ENCODE measurements at regions of chr3 and their contacts with region 1.

Region 1: GRCh38 chr3:196073188-196073838 is 8.6 kb downstream of the TFRC start:
- DNase-seq: peak; percentile 31
- H3K4me3 ChIP-seq: no peak overlapping the region
- H3K27ac ChIP-seq: no peak overlapping the region
- H3K4me1 ChIP-seq: peaks cover 4% of the 10 kb centered on the region
- H3K27me3 ChIP-seq: no peaks in the 10 kb centered on the region
- CTCF ChIP-seq: peak; percentile 61 to 86

Region 2: DNA sequence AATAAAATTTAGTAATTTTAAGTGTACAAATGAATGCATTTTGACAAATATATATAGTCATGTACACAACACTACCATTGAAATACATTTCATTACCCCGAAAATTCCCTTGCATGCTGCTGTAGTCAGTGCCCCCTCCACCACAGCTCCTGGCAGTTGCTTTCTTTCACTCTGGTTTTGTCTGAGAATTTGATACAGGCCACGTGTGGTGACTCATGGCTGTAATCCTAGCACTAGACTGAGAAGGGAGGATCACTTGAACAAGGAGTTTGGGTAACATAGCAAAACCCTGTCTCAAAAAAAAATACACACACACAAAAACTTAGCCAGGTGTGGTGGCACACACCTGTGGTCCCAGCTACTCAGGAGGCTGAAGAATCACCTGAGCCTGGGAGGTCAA is 56.8 kb before region 1 on chr3:
- CTCF ChIA-PET with region 1: no interaction called
- dilution Hi-C with region 1: no loop called
- in situ Hi-C with region 1: no loop called
- intact Hi-C with region 1: loop called (anchors 5 kb)
- DNase-seq: peak; percentile 85
- H3K4me3 ChIP-seq: no peak overlapping the region
- H3K27ac ChIP-seq: no peak overlapping the region
- H3K4me1 ChIP-seq: no peaks in the 10 kb centered on the region
- H3K27me3 ChIP-seq: peaks cover 2% of the 10 kb centered on the region
- CTCF ChIP-seq: no peak

Region 3: GRCh38 chr3:196198771-196199753 is 125.7 kb after region 1 on chr3:
- CTCF ChIA-PET with region 1: interaction called, 27 read pairs
- dilution Hi-C with region 1: no loop called
- in situ Hi-C with region 1: loop called (anchors 5 kb)
- intact Hi-C with region 1: loop called (anchors 1 kb)
- DNase-seq: no peak
- H3K4me3 ChIP-seq: no peak overlapping the region
- H3K27ac ChIP-seq: no peak overlapping the region
- H3K4me1 ChIP-seq: peaks cover 2% of the 10 kb centered on the region
- H3K27me3 ChIP-seq: no peaks in the 10 kb centered on the region
- CTCF ChIP-seq: peak; percentile 42

Region 4: GRCh38 chr3:196502775-196503195 is 429.5 kb after region 1 on chr3:
- CTCF ChIA-PET with region 1: no interaction called
- dilution Hi-C with region 1: no loop called
- in situ Hi-C with region 1: loop called in 1 of 2 experiments (anchors 25 kb)
- intact Hi-C with region 1: no loop called
- DNase-seq: peak; percentile 83
- H3K4me3 ChIP-seq: peak overlapping the region; percentile 80 to 94 (median 89)
- H3K27ac ChIP-seq: peak overlapping the region; percentile 86
- H3K4me1 ChIP-seq: peaks cover 16% of the 10 kb centered on the region
- H3K27me3 ChIP-seq: no peaks in the 10 kb centered on the region
- CTCF ChIP-seq: no peak

Measured in mammary epithelial cell (primary cell).